ENCODE measurements at regions of chr14 and their contacts with region 1.

Region 1: GRCh38 chr14:51828017-51828797 is 32.2 kb upstream of the GNG2 start:
- DNase-seq: peak; percentile 60
- H3K4me3 Mint-ChIP-seq: no peak overlapping the region
- H3K27ac Mint-ChIP-seq: no peak overlapping the region
- H3K4me1 Mint-ChIP-seq: no peaks in the 10 kb centered on the region
- H3K27me3 Mint-ChIP-seq: no peaks in the 10 kb centered on the region
- CTCF ChIP-seq: no peak

Region 2: DNA sequence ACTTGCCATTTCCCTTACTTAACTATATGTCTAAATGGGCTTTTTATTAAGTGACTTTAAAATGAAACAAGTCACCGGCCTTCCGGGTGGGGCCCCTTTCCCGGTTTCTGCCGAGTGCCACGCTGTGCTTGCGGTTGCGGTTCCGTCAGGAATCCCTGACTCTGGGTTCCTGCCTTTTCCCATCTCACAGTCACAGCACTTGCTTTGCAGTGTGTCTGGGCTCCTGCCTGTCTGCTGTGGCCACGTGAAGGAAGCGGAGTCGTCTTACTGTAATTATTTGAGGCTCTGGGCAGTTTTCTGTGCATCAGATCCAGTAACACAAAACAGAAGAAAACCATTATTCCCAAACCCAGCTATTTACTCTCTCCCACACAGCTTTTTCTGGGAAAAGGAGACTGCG is 220.5 kb before region 1 on chr14:
- CTCF ChIA-PET with region 1: no interaction called
- intact Hi-C with region 1: no loop called
- DNase-seq: no peak
- H3K4me3 Mint-ChIP-seq: no peak overlapping the region
- H3K27ac Mint-ChIP-seq: no peak overlapping the region
- H3K4me1 Mint-ChIP-seq: peaks cover 12% of the 10 kb centered on the region
- H3K27me3 Mint-ChIP-seq: no peaks in the 10 kb centered on the region
- CTCF ChIP-seq: no peak

Region 3: GRCh38 chr14:51979088-51979709 is 151.0 kb after region 1 on chr14:
- CTCF ChIA-PET with region 1: interaction called, 7 read pairs
- intact Hi-C with region 1: loop called (anchors 5 kb)
- DNase-seq: peak; percentile 80
- H3K4me3 Mint-ChIP-seq: no peak overlapping the region
- H3K27ac Mint-ChIP-seq: no peak overlapping the region
- H3K4me1 Mint-ChIP-seq: no peaks in the 10 kb centered on the region
- H3K27me3 Mint-ChIP-seq: peaks cover 58% of the 10 kb centered on the region
- CTCF ChIP-seq: peak; percentile 82